Breast epithelium (tissue), 4 donors: ENCODE measurements at regions of chr4 and their contacts with region 1.

Region 1: GRCh38 chr4:185969657-185970056 is 99.3 kb upstream of the TLR3 start:
- DNase-seq: no peak
- H3K4me3 ChIP-seq: no peak overlapping the region
- H3K27ac ChIP-seq: no peak overlapping the region
- H3K4me1 ChIP-seq: no peaks in the 10 kb centered on the region
- H3K27me3 ChIP-seq: no peaks in the 10 kb centered on the region
- CTCF ChIP-seq: no peak
- POLR2A ChIP-seq: no peak

Region 2: GRCh38 chr4:185437809-185438208 is 531.8 kb before region 1 on chr4:
- intact Hi-C with region 1: no loop called
- DNase-seq: no peak
- H3K4me3 ChIP-seq: no peak overlapping the region
- H3K27ac ChIP-seq: no peak overlapping the region
- H3K4me1 ChIP-seq: no peaks in the 10 kb centered on the region
- H3K27me3 ChIP-seq: no peaks in the 10 kb centered on the region
- CTCF ChIP-seq: no peak
- POLR2A ChIP-seq: no peak

Region 3: GRCh38 chr4:186360551-186360950 is 390.9 kb after region 1 on chr4:
- intact Hi-C with region 1: loop called (anchors 5 kb)
- DNase-seq: no peak
- H3K4me3 ChIP-seq: no peak overlapping the region
- H3K27ac ChIP-seq: no peak overlapping the region
- H3K4me1 ChIP-seq: no peaks in the 10 kb centered on the region
- H3K27me3 ChIP-seq: no peaks in the 10 kb centered on the region
- CTCF ChIP-seq: no peak
- POLR2A ChIP-seq: no peak